Sciatic nerve (tissue), 2 donors: ENCODE measurements at regions of chr2 and their contacts with region 1.

Region 1: GRCh38 chr2:192993059-192993458 is 798.3 kb upstream of the TMEFF2 start:
- DNase-seq: no peak
- ATAC-seq: no peak

Region 2: GRCh38 chr2:192957425-192957824 is 35.6 kb before region 1 on chr2:
- intact Hi-C with region 1: loop called (anchors 2 kb)
- DNase-seq: no peak
- ATAC-seq: no peak